PC-9 (cell line): ENCODE measurements at regions of chr2 and their contacts with region 1.

Region 1: GRCh38 chr2:96888072-96889011 is 18.5 kb upstream of the SEMA4C start:
- DNase-seq: peak; percentile 89 to 98
- H3K4me3 ChIP-seq: peak overlapping the region; percentile 29; the same call in 1 of the 2 replicates
- H3K27ac ChIP-seq: peak overlapping the region; percentile 69
- H3K4me1 ChIP-seq: peaks cover 71% of the 10 kb centered on the region
- H3K27me3 ChIP-seq: no peaks in the 10 kb centered on the region
- CTCF ChIP-seq: no peak

Region 2: DNA sequence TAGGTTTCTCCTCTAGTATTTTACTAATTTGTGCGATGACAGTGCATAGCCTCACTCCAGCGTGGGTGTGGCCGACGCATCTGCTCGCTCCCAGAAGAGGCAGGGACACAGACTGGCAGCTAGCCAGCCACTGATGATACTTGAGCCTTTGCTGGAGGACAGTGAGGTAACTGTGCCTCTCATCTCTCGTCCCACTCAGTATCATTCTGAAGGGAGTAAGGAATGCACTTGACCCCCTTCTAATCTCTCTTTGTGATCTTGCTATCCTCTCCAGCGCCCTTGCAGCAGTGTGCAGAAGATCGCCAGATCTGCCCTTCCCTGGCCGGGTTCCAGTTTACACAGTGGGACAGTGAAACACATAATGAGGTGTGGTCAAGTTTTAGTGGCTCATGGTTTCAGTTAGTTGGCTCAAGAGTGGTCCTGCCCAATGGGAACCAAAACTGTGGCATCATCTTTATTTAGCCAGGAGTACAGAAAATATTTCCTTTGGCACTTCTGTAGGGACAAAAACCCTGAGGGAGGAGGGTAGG is 535.2 kb before region 1 on chr2:
- CTCF ChIA-PET with region 1: no interaction called
- POLR2A ChIA-PET with region 1: no interaction called
- intact Hi-C with region 1: no loop called
- DNase-seq: no peak
- H3K4me3 ChIP-seq: no peak overlapping the region
- H3K27ac ChIP-seq: no peak overlapping the region
- H3K4me1 ChIP-seq: no peaks in the 10 kb centered on the region
- H3K27me3 ChIP-seq: no peaks in the 10 kb centered on the region
- CTCF ChIP-seq: no peak

Region 3: DNA sequence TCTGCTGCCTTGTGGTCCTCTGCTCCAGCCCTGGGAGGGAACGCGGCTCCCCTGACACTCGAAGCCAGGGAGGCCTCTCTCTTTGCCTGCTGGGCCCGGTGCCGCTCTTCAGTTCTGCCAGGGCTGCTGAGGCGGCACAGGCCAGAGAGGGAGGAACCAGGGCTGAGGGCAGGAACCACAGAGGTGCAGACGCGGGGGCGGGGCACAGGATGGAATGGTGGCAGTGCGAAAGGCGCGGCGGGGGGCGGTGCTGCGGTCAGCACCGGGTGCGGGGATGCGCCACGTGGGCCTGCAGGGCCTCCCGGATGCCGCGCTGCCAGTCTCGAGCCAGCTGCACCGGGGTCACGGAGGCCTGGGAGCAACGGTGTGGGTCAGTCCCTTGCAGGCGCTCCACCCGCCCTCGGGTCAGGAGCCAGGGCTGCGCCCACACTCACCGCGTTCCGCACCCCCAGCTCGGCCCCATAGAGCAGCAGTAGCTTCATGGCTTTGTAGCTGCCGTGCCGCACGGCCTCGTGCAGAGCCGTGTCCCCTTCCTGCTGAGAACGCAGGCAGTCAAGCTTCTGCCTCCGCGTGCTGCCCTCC is 49.0 kb before region 1 on chr2:
- CTCF ChIA-PET with region 1: interaction called, 11 read pairs
- POLR2A ChIA-PET with region 1: no interaction called
- intact Hi-C with region 1: no loop called
- DNase-seq: no peak
- H3K4me3 ChIP-seq: no peak overlapping the region
- H3K27ac ChIP-seq: no peak overlapping the region
- H3K4me1 ChIP-seq: no peaks in the 10 kb centered on the region
- H3K27me3 ChIP-seq: no peaks in the 10 kb centered on the region
- CTCF ChIP-seq: no peak